HEK293 (cell line): ENCODE measurements at regions of chr11 and their contacts with region 1.

Region 1: GRCh38 chr11:29159552-29160465 is 857.0 kb downstream of the KCNA4 start:
- H3K4me3 ChIP-seq: no peak overlapping the region
- H3K27ac ChIP-seq: no peak overlapping the region
- H3K4me1 ChIP-seq: no peaks in the 10 kb centered on the region
- CTCF ChIP-seq: 0 out of 2 replicates have a peak, but pooled peaks have one; percentile 11

Region 2: GRCh38 chr11:29135504-29135903 is 24.3 kb before region 1 on chr11:
- CTCF ChIA-PET with region 1: interaction called, 11 read pairs
- POLR2A ChIA-PET with region 1: no interaction called
- H3K4me3 ChIP-seq: no peak overlapping the region
- H3K27ac ChIP-seq: no peak overlapping the region
- H3K4me1 ChIP-seq: no peaks in the 10 kb centered on the region
- CTCF ChIP-seq: no peak

Region 3: GRCh38 chr11:29293825-29294224 is 134.0 kb after region 1 on chr11:
- CTCF ChIA-PET with region 1: no interaction called
- POLR2A ChIA-PET with region 1: no interaction called
- H3K4me3 ChIP-seq: no peak overlapping the region
- H3K27ac ChIP-seq: no peak overlapping the region
- H3K4me1 ChIP-seq: no peaks in the 10 kb centered on the region
- CTCF ChIP-seq: no peak